Activated CD8-positive, alpha-beta T cell treated with anti-CD3 and anti-CD28 coated beads, Interleukin-2, amount 10 ng/mL, durations not matched to agents 7 days and 5 days (primary cell): ENCODE measurements at regions of chr11 and their contacts with region 1.

Region 1: GRCh38 chr11:46346886-46347636 is at the start of gene DGKZ:
- DNase-seq: peak; percentile 88
- ATAC-seq: peak; percentile 73
- H3K4me3 Mint-ChIP-seq: peak within 1 kb of the TSS; percentile 82
- H3K27ac Mint-ChIP-seq: peak within 1 kb of the TSS; percentile 92
- H3K4me1 Mint-ChIP-seq: peaks cover 75% of the 10 kb centered on the region
- H3K27me3 Mint-ChIP-seq: peaks cover 7% of the 10 kb centered on the region
- total RNA-seq, gene DGKZ: 151 to 152 TPM

Region 2: DNA sequence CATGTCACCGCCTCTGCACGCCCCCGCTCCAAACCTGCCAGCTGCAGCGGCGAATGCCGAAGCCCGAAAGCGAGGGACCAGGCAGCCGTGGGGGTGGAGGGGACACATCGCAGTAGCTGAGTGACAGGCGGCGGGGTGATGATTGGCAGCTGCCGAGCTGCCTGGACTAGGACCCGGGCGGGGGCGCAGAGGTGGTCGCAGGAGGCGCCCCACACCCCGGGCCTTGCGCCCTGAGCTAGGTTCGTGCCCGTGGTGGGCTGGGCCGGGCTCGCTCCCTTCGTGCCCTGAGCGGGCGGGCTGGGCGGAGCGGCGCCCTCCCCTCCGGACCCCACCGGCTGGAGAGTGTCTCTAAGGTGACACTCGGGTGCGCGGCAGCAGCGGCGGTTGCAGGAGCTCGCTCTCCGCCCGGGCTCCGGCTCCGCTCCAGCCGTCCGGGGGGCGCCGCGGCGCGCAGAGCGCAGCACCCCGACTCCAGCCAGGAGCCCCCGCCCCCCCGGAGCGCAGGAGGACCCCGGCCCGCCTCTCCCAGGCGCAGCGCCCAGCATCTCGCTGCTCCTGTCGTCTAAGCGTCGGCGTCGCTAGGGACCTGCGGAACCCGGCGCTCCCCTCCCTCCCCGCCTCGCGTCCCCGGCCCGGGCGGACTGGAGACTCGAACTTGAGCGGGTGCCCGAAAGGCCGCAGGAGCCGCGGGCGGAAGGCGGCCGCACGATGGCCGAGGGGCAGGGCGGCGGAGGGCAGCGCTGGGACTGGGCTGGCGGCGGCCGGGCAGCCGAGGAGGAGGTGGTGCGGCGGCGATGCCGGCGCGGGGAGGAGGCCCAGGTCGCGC is 14.3 kb before region 1 on chr11:
- CTCF ChIA-PET with region 1: interaction called, 58 read pairs
- POLR2A ChIA-PET with region 1: interaction called, 6 read pairs
- DNase-seq: no peak
- ATAC-seq: peak; percentile 43
- H3K4me3 Mint-ChIP-seq: peak overlapping the region; percentile 34
- H3K27ac Mint-ChIP-seq: no peak overlapping the region
- H3K4me1 Mint-ChIP-seq: peaks cover 46% of the 10 kb centered on the region
- H3K27me3 Mint-ChIP-seq: peaks cover 47% of the 10 kb centered on the region

Region 3: DNA sequence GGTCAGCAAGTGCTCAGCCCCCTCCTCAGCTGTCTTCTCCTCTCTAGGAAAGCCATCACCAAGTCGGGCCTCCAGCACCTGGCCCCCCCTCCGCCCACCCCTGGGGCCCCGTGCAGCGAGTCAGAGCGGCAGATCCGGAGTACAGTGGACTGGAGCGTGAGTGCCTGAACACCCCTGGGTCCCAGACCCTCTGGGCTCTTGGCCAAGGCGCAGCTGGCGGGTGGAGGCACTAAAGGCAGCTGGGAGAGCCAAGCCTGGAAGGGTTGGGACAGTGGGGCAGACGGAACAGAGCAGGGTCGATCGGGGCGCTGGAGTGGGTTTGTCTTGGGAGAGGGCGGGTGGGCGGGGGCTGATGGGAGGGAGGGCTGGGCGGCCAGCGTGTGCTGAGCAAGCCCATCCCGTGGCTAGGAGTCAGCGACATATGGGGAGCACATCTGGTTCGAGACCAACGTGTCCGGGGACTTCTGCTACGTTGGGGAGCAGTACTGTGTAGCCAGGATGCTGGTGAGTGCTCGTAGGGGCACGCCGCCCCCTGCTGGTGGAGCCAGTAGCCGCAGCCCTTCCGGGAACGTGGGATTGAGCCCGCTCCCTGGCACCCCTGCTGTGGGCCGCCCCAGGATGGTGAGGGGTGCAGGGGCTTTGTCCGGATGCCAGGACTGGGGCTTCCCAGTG is 20.3 kb after region 1 on chr11:
- CTCF ChIA-PET with region 1: interaction called, 381 read pairs
- POLR2A ChIA-PET with region 1: interaction called, 77 read pairs
- DNase-seq: peak; percentile 84
- ATAC-seq: peak; percentile 92
- H3K4me3 Mint-ChIP-seq: no peak overlapping the region
- H3K27ac Mint-ChIP-seq: peak overlapping the region; percentile 52
- H3K4me1 Mint-ChIP-seq: peaks cover 38% of the 10 kb centered on the region
- H3K27me3 Mint-ChIP-seq: no peaks in the 10 kb centered on the region

Region 4: GRCh38 chr11:46421257-46421880 is 74.3 kb after region 1 on chr11:
- CTCF ChIA-PET with region 1: no interaction called
- POLR2A ChIA-PET with region 1: no interaction called
- DNase-seq: no peak
- ATAC-seq: no peak
- H3K4me3 Mint-ChIP-seq: no peak overlapping the region
- H3K27ac Mint-ChIP-seq: no peak overlapping the region
- H3K4me1 Mint-ChIP-seq: no peaks in the 10 kb centered on the region
- H3K27me3 Mint-ChIP-seq: no peaks in the 10 kb centered on the region